ENCODE measurements at regions of chr7 and their contacts with region 1.

Region 1: DNA sequence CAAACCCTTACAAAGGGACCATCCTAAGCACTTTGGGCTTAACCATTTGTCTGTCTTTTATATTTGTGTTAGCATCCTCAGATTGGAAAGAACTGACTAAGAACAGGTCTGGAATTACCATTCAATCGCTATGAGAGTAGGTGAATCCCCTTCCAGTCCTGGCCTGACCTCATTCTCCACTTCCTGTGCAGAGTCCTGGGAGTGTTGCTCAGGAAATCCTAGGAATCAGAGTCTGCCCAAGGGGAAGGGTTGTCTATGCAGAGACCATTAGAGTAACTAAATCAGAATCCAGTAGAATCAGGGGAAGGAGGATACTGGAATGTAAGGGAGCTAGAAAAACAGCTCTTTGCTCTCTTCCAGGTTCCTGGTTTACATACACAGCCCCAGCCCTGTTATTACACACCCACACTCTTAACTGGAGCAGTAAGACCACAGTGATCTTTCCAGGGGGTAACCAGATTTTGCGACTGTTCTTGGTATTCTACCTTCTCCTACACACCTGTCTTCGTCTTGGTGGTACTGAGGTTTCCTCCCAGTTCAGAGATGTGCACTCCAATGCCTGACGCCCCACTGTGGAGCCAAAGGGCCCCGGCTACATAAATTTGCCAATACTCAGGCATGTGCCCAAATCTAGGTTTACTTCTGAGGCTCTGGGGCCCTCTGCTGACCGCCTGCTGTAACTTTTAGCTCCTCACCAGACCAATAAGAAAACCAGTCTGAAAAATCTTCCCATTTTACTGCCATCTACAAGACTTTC is 103.7 kb downstream of the RNF216 start:
- DNase-seq: peak; percentile 84
- H3K4me3 ChIP-seq: no peak overlapping the region
- H3K27ac ChIP-seq: peak overlapping the region in 7 of 8 donors; percentile 0 to 86 (median 76)
- H3K4me1 ChIP-seq: peaks cover 56 to 81% (median 61%) of the 10 kb centered on the region in 6 donors
- H3K27me3 ChIP-seq: no peaks in the 10 kb centered on the region
- CTCF ChIP-seq: peak in 10 of 11 experiments; percentile 30 to 80 (median 65)
- POLR2A ChIP-seq: no peak

Region 2: DNA sequence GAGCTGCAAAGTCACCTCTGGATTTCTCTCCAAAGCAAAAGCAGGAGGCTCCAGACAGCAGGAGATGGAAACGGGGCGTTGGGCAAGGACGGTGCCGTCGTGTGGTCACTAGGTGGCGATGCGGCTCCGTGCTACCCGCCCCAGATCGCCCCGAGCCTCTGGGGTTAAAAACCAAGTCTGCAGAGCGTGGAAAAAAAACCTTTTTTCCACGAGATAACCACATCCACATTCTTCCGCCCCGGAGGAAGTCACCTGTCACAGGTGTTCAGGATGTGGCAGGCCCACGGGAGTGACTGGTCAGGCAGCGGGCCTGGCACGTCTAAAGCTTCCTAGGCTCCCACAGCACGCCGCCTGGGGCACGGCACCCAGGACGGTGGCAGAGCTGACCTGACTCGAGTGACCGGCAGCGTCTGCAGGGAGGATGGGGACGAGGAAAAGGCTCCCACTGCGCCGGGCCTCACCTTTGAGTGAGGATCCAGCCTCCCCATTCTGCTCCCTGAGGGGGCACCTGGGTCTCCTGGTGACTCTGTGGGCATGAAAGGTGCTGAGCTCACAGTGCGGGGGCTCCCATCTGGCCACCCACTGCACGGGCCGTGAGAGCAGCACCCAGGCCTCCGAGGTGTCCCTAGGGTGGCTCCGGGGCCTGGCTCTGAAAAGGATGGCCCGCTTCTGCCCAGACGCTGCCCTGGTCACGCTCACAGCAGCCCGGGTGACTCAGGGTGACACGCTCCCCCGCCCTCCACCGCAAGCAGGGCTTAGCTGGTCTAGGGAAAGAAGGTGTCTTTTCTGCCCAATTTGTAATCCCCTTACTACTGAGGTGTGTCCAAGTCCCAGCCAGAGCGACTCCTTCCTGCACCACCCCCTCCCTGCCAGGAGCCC is 182.8 kb before region 1 on chr7:
- intact Hi-C with region 1: loop called (anchors 10 kb)
- DNase-seq: peak; percentile 94
- H3K4me3 ChIP-seq: peak overlapping the region in 7 of 8 donors; percentile 2 to 57 (median 22)
- H3K27ac ChIP-seq: peak overlapping the region in 4 of 8 donors; percentile 26 to 63 (median 34)
- H3K4me1 ChIP-seq: peaks cover 15 to 58% (median 36%) of the 10 kb centered on the region in 6 donors
- H3K27me3 ChIP-seq: no peaks in the 10 kb centered on the region
- CTCF ChIP-seq: peak; percentile 86 to 96 (median 93)
- POLR2A ChIP-seq: no peak

Region 3: DNA sequence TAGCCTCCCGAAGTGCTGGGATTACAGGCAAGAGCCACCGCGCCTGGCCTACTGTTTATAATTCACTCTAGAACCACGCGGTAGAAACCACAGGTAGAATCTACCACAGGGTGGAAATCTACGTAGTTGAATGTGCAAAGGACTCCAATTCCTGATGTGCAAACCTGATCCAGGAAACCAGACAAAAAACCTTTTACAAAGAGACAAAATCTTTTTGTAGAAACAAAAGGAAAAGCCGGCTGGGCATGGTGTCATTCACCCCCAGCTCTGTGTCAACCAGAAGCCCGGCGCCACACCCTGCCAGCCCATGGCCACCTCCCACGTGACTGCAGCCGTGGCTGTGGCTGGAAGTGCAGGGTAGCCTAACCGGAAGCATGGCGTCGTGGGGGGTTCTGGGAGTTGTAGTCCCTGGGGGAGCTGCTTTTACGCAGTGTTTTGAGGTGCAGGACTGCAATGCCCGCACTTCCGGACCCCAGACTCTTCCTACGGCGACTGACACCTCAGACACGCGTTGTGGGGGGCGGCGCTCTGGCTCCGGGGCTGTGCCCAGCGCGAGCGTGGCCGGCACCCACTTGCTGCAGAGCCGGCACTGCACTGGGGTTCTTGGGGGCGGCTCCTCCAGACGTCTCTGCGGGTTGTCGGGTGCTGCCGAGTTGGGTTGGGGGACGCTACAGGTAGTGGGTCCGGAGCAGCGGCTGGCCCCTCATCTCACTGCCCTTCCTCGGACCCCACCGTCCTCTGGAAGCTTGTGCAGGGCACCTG is 145.2 kb after region 1 on chr7:
- intact Hi-C with region 1: no loop called
- DNase-seq: peak; percentile 100
- H3K4me3 ChIP-seq: peak overlapping the region; percentile 51 to 82 (median 66)
- H3K27ac ChIP-seq: peak overlapping the region; percentile 79 to 93 (median 90)
- H3K4me1 ChIP-seq: peaks cover 0 to 41% (median 17%) of the 10 kb centered on the region in 6 donors
- H3K27me3 ChIP-seq: no peaks in the 10 kb centered on the region
- CTCF ChIP-seq: peak; percentile 44 to 88 (median 63)
- POLR2A ChIP-seq: no peak